ENCODE measurements at regions of chr2 and their contacts with region 1.

Region 1: DNA sequence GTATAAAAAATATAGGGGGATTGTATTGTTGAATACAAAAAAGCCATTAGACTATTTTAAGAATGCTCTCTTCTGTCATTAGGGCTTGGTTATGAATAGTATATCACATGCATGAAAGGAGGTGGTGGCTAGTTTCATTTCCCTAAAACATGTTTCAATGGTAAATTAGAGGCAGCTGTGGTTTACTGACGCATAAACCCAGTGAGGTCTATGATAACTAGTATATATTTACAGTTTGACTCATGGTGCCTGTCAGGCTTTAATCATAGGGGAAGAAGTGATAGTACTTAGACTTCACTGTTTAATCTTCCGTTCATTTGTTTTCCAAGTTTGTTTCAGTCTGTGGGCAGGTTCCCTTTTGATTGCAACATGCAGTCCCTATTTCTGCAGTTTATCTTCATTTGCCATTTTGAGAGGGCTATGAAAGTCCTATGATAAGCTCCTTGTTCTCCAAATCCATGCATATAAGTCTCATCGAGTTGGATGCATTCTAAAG is 55.1 kb upstream of the MAP4K3 start:
- DNase-seq: no peak
- ATAC-seq: peak; percentile 92
- H3K4me3 Mint-ChIP-seq: peak overlapping the region; percentile 66
- H3K27ac Mint-ChIP-seq: peak overlapping the region; percentile 87
- H3K4me1 Mint-ChIP-seq: peaks cover 57% of the 10 kb centered on the region
- H3K27me3 Mint-ChIP-seq: peaks cover 10% of the 10 kb centered on the region
- CTCF ChIP-seq: no peak

Region 2: GRCh38 chr2:39141331-39142271 is 350.5 kb before region 1 on chr2:
- CTCF ChIA-PET with region 1: no interaction called
- POLR2A ChIA-PET with region 1: no interaction called
- intact Hi-C with region 1: loop called (anchors 1 kb)
- DNase-seq: no peak
- ATAC-seq: peak; percentile 86
- H3K4me3 Mint-ChIP-seq: peak overlapping the region; percentile 72
- H3K27ac Mint-ChIP-seq: peak overlapping the region; percentile 91
- H3K4me1 Mint-ChIP-seq: peaks cover 50% of the 10 kb centered on the region
- H3K27me3 Mint-ChIP-seq: no peaks in the 10 kb centered on the region
- CTCF ChIP-seq: no peak

Region 3: GRCh38 chr2:39194686-39195085 is 297.5 kb before region 1 on chr2:
- CTCF ChIA-PET with region 1: no interaction called
- POLR2A ChIA-PET with region 1: no interaction called
- intact Hi-C with region 1: no loop called
- DNase-seq: no peak
- ATAC-seq: no peak
- H3K4me3 Mint-ChIP-seq: no peak overlapping the region
- H3K27ac Mint-ChIP-seq: no peak overlapping the region
- H3K4me1 Mint-ChIP-seq: no peaks in the 10 kb centered on the region
- H3K27me3 Mint-ChIP-seq: no peaks in the 10 kb centered on the region
- CTCF ChIP-seq: no peak

Region 4: DNA sequence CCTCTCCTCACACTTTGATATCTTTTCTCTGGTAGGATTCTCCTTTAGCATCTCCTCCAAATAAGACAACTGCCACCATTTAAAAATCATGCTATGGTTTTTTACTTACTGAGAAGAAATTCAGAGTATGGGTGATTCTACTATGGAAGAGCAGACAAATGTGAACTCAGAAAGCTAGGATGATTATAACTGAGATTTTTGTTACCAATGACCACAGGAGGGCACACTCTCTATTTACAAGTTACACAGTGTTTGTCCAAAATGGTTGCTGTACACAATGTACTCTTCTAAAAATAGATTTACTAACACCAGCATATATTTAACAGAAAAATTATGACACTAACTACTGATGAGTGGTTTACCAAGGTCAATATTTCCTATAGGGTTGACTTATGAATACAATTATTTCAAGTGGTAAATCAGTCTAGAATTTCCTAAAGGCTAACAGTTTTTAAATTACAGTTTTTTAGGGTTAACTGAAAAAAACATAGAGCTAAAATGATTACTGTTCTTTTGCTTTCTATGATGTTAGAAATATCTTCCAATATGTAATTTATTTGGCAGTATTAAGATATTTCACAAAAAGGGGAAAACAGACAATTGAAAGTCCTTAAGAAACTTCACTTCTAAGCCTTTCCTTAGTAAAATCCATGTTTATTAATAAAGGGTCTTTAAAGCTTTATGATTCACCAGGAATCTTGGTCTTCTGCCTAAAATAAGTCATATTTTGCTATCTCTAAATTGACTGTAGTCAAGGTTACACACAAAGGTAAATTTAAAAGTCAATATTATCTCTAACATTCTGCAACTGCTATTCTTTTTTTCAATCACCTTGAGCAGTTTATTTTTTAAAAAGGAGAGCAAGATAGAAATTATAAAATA is 112.3 kb before region 1 on chr2:
- CTCF ChIA-PET with region 1: interaction called, 3 read pairs
- POLR2A ChIA-PET with region 1: interaction called, 4 read pairs
- intact Hi-C with region 1: loop called (anchors 1 kb)
- DNase-seq: no peak
- ATAC-seq: peak; percentile 35
- H3K4me3 Mint-ChIP-seq: no peak overlapping the region
- H3K27ac Mint-ChIP-seq: no peak overlapping the region
- H3K4me1 Mint-ChIP-seq: peaks cover 30% of the 10 kb centered on the region
- H3K27me3 Mint-ChIP-seq: no peaks in the 10 kb centered on the region
- CTCF ChIP-seq: no peak

Region 5: DNA sequence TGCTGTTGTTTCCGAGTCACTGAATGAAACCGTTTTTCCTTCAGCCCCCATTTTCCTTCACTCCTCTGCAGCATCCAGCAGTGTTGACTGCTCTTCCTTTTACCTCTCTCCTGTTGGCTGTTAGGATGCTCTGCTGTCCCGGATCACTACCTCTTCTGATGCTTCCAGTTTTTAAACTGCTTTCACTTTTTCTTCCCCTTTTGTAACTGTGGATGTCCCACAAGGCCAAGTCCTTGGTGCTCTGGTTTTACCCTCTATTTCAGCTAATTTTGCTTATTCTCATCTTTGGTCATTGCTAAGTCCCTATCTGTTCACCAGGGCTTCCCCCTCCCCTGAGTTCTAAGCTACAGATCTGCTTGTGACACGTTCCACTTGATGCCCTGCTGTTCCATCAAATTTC is 15.6 kb before region 1 on chr2:
- CTCF ChIA-PET with region 1: no interaction called
- POLR2A ChIA-PET with region 1: interaction called, 20 read pairs
- intact Hi-C with region 1: loop called (anchors 1 kb)
- DNase-seq: no peak
- ATAC-seq: peak; percentile 94
- H3K4me3 Mint-ChIP-seq: peak overlapping the region; percentile 62
- H3K27ac Mint-ChIP-seq: peak overlapping the region; percentile 75
- H3K4me1 Mint-ChIP-seq: peaks cover 28% of the 10 kb centered on the region
- H3K27me3 Mint-ChIP-seq: no peaks in the 10 kb centered on the region
- CTCF ChIP-seq: no peak

Region 6: GRCh38 chr2:39513641-39514094 is 21.5 kb after region 1 on chr2:
- CTCF ChIA-PET with region 1: no interaction called
- POLR2A ChIA-PET with region 1: interaction called, 3 read pairs
- intact Hi-C with region 1: loop called (anchors 2 kb)
- DNase-seq: no peak
- ATAC-seq: peak; percentile 57
- H3K4me3 Mint-ChIP-seq: no peak overlapping the region
- H3K27ac Mint-ChIP-seq: no peak overlapping the region
- H3K4me1 Mint-ChIP-seq: peaks cover 19% of the 10 kb centered on the region
- H3K27me3 Mint-ChIP-seq: no peaks in the 10 kb centered on the region
- CTCF ChIP-seq: no peak

Region 7: DNA sequence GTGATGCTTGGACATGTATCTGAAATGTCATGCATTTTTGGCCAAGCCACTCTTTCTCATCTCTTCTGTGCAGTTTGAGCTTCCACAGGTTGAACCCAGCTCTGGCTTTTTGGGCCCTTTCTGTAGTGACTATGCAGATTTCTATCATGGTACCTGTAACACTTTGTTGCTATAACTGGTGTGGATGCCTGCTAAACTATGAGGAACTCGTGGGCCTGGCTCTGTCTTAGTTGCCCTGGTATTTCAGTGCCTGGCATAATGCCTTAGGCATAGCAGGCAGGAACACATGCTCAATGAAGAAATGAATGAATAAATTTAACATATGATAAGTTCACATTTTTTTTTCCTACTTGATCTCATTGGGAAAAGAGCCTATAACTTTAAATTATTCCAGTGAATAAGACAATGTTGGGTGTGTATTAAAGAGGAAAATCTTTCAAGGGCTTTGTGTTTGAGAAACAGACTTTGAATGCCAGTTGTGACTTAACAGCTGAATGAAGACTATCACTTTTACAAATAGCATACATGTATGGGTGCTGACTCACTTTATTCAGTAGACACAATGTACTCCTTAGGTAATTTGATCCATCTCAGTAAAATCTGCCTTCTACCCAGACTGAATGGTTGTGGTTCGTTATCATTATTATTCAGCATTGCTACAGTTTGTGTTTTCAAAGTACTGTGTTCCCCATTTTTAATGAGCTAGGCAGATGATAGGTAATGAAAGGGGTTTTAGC is 31.3 kb after region 1 on chr2:
- CTCF ChIA-PET with region 1: no interaction called
- POLR2A ChIA-PET with region 1: no interaction called
- intact Hi-C with region 1: loop called (anchors 1 kb)
- DNase-seq: no peak
- ATAC-seq: no peak
- H3K4me3 Mint-ChIP-seq: no peak overlapping the region
- H3K27ac Mint-ChIP-seq: no peak overlapping the region
- H3K4me1 Mint-ChIP-seq: peaks cover 40% of the 10 kb centered on the region
- H3K27me3 Mint-ChIP-seq: no peaks in the 10 kb centered on the region
- CTCF ChIP-seq: no peak

Region 8: DNA sequence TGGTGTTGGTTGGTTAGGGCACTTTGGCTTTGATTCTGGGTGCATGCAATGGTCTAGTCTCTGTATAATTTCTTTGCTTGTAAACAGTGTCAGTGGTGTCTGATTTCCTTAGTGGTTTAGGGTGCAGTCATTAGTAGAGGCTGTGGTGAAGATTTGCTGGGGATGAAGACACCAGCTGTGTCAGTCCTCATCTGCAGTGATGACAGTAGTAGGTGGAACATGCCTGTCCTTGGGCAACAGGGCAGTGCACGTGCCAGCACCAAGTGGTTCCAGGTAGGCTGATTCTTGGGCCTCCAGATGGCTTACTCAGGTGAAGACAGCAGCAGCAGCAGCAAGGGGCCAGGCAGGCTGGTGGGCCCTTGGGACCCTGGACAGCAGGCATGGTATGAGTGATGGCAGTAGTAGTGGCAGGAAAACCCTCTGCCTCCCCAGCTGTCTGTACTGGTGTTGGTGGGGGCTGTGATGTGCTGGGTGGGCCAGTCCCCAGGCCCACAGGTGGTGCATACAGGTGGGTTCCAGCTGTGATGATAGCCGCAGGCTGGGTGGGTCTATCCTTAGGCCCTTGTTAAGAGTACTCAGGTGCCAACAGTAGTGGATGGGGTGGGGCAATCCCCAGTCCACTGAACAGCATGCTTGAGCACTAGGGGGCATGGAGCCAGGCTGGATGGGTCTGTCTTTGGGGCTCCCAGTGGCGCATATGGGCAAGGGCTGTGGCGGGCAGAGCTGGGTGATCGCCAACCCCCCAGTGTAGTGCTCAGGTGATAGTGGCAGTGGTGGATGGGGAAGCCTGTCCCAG is 427.6 kb after region 1 on chr2:
- CTCF ChIA-PET with region 1: no interaction called
- POLR2A ChIA-PET with region 1: no interaction called
- intact Hi-C with region 1: no loop called
- DNase-seq: no peak
- ATAC-seq: no peak
- H3K4me3 Mint-ChIP-seq: no peak overlapping the region
- H3K27ac Mint-ChIP-seq: no peak overlapping the region
- H3K4me1 Mint-ChIP-seq: no peaks in the 10 kb centered on the region
- H3K27me3 Mint-ChIP-seq: peaks cover 3% of the 10 kb centered on the region
- CTCF ChIP-seq: no peak